GM12878 (cell line): ENCODE measurements at regions of chr10 and their contacts with region 1.

Region 1: GRCh38 chr10:88835096-88835909 is 16.3 kb downstream of the ANKRD22 start:
- DNase-seq: peak; percentile 59
- ATAC-seq: peak; percentile 96
- H3K4me3 ChIP-seq: no peak overlapping the region
- H3K27ac ChIP-seq: no peak overlapping the region
- H3K4me1 ChIP-seq: peaks cover 11% of the 10 kb centered on the region
- H3K27me3 ChIP-seq: no peaks in the 10 kb centered on the region
- CTCF ChIP-seq: peak; percentile 78 to 97 (median 91)
- EP300 ChIP-seq: no peak
- POLR2A ChIP-seq: no peak
- RAD21 ChIP-seq: peak; percentile 99

Region 2: DNA sequence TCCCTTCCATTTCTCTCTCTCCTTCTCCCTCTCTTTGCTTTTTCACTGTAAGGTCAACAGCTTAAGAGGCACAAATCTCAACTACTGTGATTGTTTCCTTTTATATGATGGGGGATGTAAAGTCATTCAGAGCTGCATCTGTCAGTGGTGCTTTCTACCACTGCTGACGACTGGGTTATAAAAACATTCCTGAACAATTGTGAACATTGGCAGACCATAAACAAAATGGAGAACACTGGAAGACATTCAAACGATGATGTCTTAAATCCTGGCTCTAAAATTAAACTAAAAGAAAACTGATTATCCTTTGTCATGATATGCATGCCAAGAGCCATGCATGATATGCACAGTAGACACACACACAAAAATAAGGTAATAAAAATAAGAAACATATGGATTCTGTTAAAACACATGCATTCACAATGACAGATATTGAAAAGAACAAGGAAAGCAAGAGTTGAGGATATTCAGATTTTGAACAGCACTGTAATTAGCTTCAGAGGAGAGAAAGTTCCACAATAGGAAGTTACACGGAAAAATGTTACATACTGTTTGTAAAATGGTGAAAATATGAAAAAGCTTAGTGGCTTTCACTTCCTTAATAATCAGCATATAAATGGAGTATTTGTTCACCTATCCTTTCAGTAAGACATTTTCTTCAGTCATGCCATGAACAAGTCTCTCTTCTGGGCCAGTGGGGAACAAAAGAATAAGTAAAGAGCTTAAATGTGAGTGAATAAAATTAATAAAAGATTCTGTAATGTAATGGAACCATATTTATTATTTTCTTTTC is 341.4 kb before region 1 on chr10:
- CTCF ChIA-PET with region 1: no interaction called
- POLR2A ChIA-PET with region 1: no interaction called
- RAD21 ChIA-PET with region 1: no interaction called
- SMC1A ChIA-PET with region 1: no interaction called
- in situ Hi-C with region 1: no loop called
- intact Hi-C with region 1: no loop called
- DNase-seq: no peak
- ATAC-seq: peak; percentile 60
- H3K4me3 ChIP-seq: no peak overlapping the region
- H3K27ac ChIP-seq: no peak overlapping the region
- H3K4me1 ChIP-seq: 0 out of 2 replicates have a peak, but pooled peaks cover 4% of the 10 kb centered on the region
- H3K27me3 ChIP-seq: no peaks in the 10 kb centered on the region
- CTCF ChIP-seq: no peak
- EP300 ChIP-seq: no peak
- POLR2A ChIP-seq: no peak
- RAD21 ChIP-seq: no peak

Region 3: GRCh38 chr10:88565072-88565471 is 270.2 kb before region 1 on chr10:
- CTCF ChIA-PET with region 1: interaction called, 6 read pairs
- POLR2A ChIA-PET with region 1: no interaction called
- RAD21 ChIA-PET with region 1: interaction called, 10 read pairs
- SMC1A ChIA-PET with region 1: interaction called, 8 read pairs
- in situ Hi-C with region 1: no loop called
- intact Hi-C with region 1: no loop called
- DNase-seq: no peak
- ATAC-seq: peak; percentile 82
- H3K4me3 ChIP-seq: no peak overlapping the region
- H3K27ac ChIP-seq: no peak overlapping the region
- H3K4me1 ChIP-seq: no peaks in the 10 kb centered on the region
- H3K27me3 ChIP-seq: no peaks in the 10 kb centered on the region
- CTCF ChIP-seq: peak; percentile 30 to 63 (median 40); a peak in 5 of 6 replicates
- EP300 ChIP-seq: no peak
- POLR2A ChIP-seq: no peak
- RAD21 ChIP-seq: peak; percentile 73

Region 4: DNA sequence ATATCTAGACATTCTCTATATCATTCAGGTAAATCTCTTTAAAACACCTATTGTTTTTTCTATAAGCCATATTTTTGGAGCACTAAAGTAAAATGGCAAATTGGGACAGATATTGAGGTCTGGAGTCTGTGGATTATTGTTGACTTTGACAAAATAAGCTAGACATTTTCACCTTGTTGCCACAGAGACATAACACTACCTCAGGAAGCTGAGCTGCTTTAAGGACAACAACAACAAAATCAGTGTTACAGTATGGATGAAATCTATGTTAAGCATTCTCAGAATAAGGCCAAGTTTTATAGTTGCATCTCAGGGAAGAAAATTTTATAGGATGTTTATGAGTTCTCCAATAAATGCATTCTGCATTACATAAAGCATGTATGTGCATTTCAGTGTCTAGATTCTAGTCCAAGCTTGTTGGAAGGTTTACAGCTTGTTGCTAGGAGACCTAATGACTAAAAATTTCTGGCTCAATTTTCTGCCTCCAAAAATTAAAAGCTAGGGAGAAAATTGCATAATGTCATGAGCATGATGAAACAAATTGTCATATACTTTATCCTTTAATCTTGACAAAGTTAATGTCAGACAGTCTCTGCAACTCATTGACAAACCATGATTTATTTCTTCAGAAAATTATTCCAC is 14.4 kb before region 1 on chr10:
- CTCF ChIA-PET with region 1: interaction called, 76 read pairs
- POLR2A ChIA-PET with region 1: no interaction called
- RAD21 ChIA-PET with region 1: interaction called, 28 read pairs
- SMC1A ChIA-PET with region 1: interaction called, 40 read pairs
- in situ Hi-C with region 1: no loop called
- intact Hi-C with region 1: no loop called
- DNase-seq: no peak
- ATAC-seq: no peak
- H3K4me3 ChIP-seq: no peak overlapping the region
- H3K27ac ChIP-seq: no peak overlapping the region
- H3K4me1 ChIP-seq: 0 out of 2 replicates have a peak, but pooled peaks cover 3% of the 10 kb centered on the region
- H3K27me3 ChIP-seq: 0 out of 4 replicates have a peak, but pooled peaks cover 0 to 2% of the 10 kb centered on the region in 2 experiments
- CTCF ChIP-seq: no peak
- EP300 ChIP-seq: no peak
- POLR2A ChIP-seq: no peak
- RAD21 ChIP-seq: no peak

Region 5: DNA sequence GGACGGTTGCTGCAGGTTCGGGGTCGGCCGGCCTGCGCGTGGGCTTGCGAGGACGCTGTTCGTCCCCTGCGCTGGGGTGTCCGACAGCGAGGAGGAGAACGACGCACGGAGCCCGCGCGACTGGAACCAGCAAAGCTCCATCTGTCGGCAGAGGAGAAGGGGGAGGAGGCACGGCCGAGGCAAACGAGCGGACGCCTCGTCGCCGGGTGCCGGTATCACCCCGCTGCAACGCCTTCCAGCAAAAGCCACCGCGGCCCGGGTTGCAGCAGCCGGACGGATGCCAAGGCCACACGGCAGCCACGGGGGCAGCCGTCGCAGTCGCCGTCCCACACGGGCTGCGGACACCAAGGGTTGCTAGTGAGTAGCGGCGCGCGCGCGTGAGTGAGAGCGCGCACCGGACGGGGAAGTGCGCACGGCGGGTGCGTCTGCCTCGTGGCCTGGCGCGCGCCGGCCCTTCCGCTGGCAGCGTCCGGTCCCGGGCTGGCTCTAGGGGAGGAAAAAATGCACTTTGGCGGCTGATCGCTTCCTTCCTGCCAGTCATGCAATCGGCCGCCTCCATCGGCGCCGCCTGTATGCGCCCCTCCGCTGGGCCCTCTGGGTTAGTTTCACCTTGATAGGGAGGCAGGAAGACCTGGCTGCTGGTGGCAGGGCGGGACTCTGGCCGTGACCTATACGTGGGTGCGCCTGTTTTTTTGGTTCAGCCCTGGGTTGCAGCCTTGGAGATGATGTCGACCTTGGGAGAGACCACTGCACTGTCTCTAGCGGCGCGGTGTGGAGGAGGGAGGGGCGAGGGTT is 45.2 kb after region 1 on chr10:
- CTCF ChIA-PET with region 1: interaction called, 72 read pairs
- POLR2A ChIA-PET with region 1: no interaction called
- RAD21 ChIA-PET with region 1: interaction called, 30 read pairs
- SMC1A ChIA-PET with region 1: interaction called, 86 read pairs
- in situ Hi-C with region 1: no loop called
- intact Hi-C with region 1: loop called (anchors 1 kb)
- DNase-seq: peak; percentile 70
- ATAC-seq: peak; percentile 84
- H3K4me3 ChIP-seq: peak overlapping the region; percentile 89
- H3K27ac ChIP-seq: peak overlapping the region; percentile 82
- H3K4me1 ChIP-seq: peaks cover 20% of the 10 kb centered on the region
- H3K27me3 ChIP-seq: no peaks in the 10 kb centered on the region
- CTCF ChIP-seq: peak in 2 of 3 experiments; percentile 22 to 23; a peak in 3 of 6 replicates
- EP300 ChIP-seq: 0 out of 4 replicates have a peak, but pooled peaks of 1 of the 2 experiments have one; percentile 36
- POLR2A ChIP-seq: peak; percentile 96
- RAD21 ChIP-seq: 0 out of 2 replicates have a peak, but pooled peaks have one; percentile 5

Region 6: GRCh38 chr10:88926566-88927415 is 91.5 kb after region 1 on chr10:
- CTCF ChIA-PET with region 1: interaction called, 895 read pairs
- POLR2A ChIA-PET with region 1: interaction called, 64 read pairs
- RAD21 ChIA-PET with region 1: interaction called, 390 read pairs
- SMC1A ChIA-PET with region 1: interaction called, 575 read pairs
- in situ Hi-C with region 1: no loop called
- intact Hi-C with region 1: no loop called
- DNase-seq: no peak
- ATAC-seq: no peak
- H3K4me3 ChIP-seq: no peak overlapping the region
- H3K27ac ChIP-seq: no peak overlapping the region
- H3K4me1 ChIP-seq: peaks cover 5% of the 10 kb centered on the region; the same call in 1 of the 2 replicates
- H3K27me3 ChIP-seq: no peaks in the 10 kb centered on the region
- CTCF ChIP-seq: no peak
- EP300 ChIP-seq: no peak
- POLR2A ChIP-seq: no peak
- RAD21 ChIP-seq: no peak

Region 7: GRCh38 chr10:89029785-89030437 is 194.6 kb after region 1 on chr10:
- CTCF ChIA-PET with region 1: interaction called, 18 read pairs
- POLR2A ChIA-PET with region 1: no interaction called
- RAD21 ChIA-PET with region 1: interaction called, 6 read pairs
- SMC1A ChIA-PET with region 1: interaction called, 4 read pairs
- in situ Hi-C with region 1: no loop called
- intact Hi-C with region 1: no loop called
- DNase-seq: peak; percentile 24
- ATAC-seq: peak; percentile 70
- H3K4me3 ChIP-seq: no peak overlapping the region
- H3K27ac ChIP-seq: no peak overlapping the region
- H3K4me1 ChIP-seq: peaks cover 26% of the 10 kb centered on the region
- H3K27me3 ChIP-seq: no peaks in the 10 kb centered on the region
- CTCF ChIP-seq: peak; percentile 76 to 90 (median 82)
- EP300 ChIP-seq: no peak
- POLR2A ChIP-seq: no peak
- RAD21 ChIP-seq: peak; percentile 86

Region 8: GRCh38 chr10:89342206-89342958 is 507.1 kb after region 1 on chr10:
- CTCF ChIA-PET with region 1: no interaction called
- POLR2A ChIA-PET with region 1: no interaction called
- RAD21 ChIA-PET with region 1: no interaction called
- SMC1A ChIA-PET with region 1: no interaction called
- in situ Hi-C with region 1: no loop called
- intact Hi-C with region 1: no loop called
- DNase-seq: no peak
- ATAC-seq: peak; percentile 25; the same call in 2 of the 3 replicates
- H3K4me3 ChIP-seq: no peak overlapping the region
- H3K27ac ChIP-seq: no peak overlapping the region
- H3K4me1 ChIP-seq: peaks cover 5% of the 10 kb centered on the region
- H3K27me3 ChIP-seq: no peaks in the 10 kb centered on the region
- CTCF ChIP-seq: no peak
- EP300 ChIP-seq: no peak
- POLR2A ChIP-seq: 0 out of 2 replicates have a peak, but pooled peaks have one; percentile 37
- RAD21 ChIP-seq: no peak